ENCODE measurements at regions of chr1 and their contacts with region 1.

Region 1: GRCh38 chr1:27258598-27258997 is 24.2 kb downstream of the WDTC1 start:
- DNase-seq: no peak
- ATAC-seq: no peak
- H3K4me3 Mint-ChIP-seq: no peak overlapping the region
- H3K27ac Mint-ChIP-seq: no peak overlapping the region
- H3K4me1 Mint-ChIP-seq: no peaks in the 10 kb centered on the region
- H3K27me3 Mint-ChIP-seq: no peaks in the 10 kb centered on the region
- CTCF ChIP-seq: no peak

Region 2: GRCh38 chr1:27341525-27342252 is 83.1 kb after region 1 on chr1 and contains the start of gene SYTL1:
- CTCF ChIA-PET with region 1: no interaction called
- POLR2A ChIA-PET with region 1: interaction called, 12 read pairs
- DNase-seq: peak; percentile 72
- ATAC-seq: peak; percentile 80
- H3K4me3 Mint-ChIP-seq: peak within 1 kb of the TSS; percentile 67
- H3K27ac Mint-ChIP-seq: peak within 1 kb of the TSS; percentile 38
- H3K4me1 Mint-ChIP-seq: peaks cover 39% of the 10 kb centered on the region
- H3K27me3 Mint-ChIP-seq: peaks cover 2% of the 10 kb centered on the region; the same call in 1 of the 2 replicates
- CTCF ChIP-seq: no peak
- total RNA-seq, gene SYTL1: 18.0 to 19.7 TPM (median 18.5 TPM) in 3 replicates